ENCODE measurements at regions of chr12 and their contacts with region 1.

Region 1: GRCh38 chr12:3084742-3085141 is 7.6 kb downstream of the TSPAN9 start:
- DNase-seq: peak; percentile 50
- ATAC-seq: peak; percentile 61

Region 2: DNA sequence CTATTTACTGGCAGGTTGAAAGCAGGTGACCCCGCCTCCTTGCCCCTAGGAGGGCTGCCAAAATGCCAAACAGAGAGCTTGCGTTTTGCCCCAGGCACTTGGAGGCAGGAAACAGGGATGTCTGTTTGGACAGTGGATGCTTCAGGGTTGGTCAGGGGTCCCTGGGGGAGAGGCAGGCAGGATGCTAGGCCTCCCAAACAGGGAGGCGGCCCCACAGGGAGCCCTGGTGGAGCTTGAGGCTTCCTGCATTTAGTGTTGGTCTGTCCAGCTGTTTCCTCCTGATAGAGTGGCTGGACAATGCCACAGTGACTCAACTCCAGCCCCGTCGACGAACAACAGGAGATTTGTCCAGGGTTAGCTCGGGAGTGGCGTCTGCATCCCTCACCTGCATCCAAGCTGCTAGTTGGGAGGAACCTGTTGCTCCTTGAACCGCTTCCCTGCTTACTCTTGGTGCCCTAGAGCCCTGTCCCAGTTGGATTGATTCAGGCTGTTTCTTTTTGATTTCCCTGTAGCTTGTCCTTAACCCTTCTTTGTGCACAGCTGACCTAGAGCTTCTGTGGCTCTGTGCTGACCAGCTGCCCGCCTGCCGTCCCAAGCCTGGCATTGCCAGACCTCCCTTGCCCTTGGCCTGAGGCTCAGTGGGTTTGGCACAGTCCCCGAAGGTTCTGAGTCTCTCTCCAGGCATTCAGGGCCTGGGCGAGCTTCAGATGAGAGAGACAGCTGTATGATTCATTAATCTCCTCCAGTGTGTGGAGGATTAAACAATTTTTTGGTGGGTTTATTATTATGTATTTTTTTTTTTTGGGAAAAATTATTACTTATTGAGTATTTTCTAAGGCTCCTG is 38.3 kb after region 1 on chr12:
- intact Hi-C with region 1: loop called (anchors 5 kb)
- DNase-seq: peak; percentile 69
- ATAC-seq: peak; percentile 16